Gastrocnemius medialis (tissue), 4 donors: ENCODE measurements at regions of chr11 and their contacts with region 1.

Region 1: DNA sequence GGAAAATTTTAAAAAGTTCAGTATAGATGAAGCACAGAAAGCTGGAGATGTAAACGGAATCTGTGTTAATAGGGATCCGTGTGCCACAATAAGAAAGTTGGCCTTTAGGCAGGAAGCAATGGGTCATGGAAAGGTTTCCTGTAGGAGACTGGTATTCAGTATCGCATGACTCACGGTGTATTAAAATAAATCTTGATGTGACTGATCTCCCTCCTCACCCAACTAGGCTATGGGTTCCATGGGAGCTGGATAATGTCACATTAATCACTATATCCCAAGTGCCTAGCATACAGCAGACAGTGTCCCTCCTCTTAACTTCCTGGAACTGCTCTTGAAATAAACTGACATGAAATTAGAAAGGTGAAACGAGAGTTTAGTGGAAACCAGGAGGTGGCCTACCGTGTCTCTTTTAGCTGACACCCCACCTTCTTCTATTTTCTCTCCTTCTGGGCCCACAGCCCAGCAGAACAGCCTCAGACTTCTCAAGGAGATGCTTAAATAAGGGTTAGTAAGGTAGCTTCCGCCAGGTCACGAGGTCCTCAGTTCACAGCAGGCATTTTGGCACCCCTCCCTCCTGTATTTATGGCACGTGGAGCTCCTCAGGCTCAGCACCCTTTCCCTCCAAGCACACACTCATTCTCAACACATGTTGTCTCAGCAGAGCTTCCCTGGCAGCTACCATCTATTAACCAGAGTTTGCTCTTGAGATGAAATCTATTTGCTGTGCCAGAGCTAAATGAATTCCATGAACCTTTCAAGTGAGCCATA is 118.8 kb downstream of the NXPE2 start:
- DNase-seq: peak; percentile 54 to 82
- ATAC-seq: peak; percentile 98 to 99
- H3K4me3 ChIP-seq: no peak overlapping the region
- H3K27ac ChIP-seq: peak overlapping the region; percentile 83 to 92 (median 89)
- H3K4me1 ChIP-seq: peaks cover 45 to 51% of the 10 kb centered on the region in 2 donors
- H3K27me3 ChIP-seq: no peaks in the 10 kb centered on the region
- CTCF ChIP-seq: no peak
- POLR2A ChIP-seq: no peak

Region 2: GRCh38 chr11:114846416-114846791 is 49.3 kb after region 1 on chr11:
- in situ Hi-C with region 1: no loop called
- intact Hi-C with region 1: loop called (anchors 5 kb)
- DNase-seq: peak; percentile 80
- ATAC-seq: peak; percentile 99
- H3K4me3 ChIP-seq: no peak overlapping the region
- H3K27ac ChIP-seq: no peak overlapping the region
- H3K4me1 ChIP-seq: peaks cover 6 to 19% of the 10 kb centered on the region in 2 donors
- H3K27me3 ChIP-seq: no peaks in the 10 kb centered on the region
- CTCF ChIP-seq: peak in 4 of 5 experiments; percentile 20 to 54 (median 36)
- POLR2A ChIP-seq: no peak